Common myeloid progenitor, CD34-positive (primary cell): ENCODE measurements at regions of chr15 and their contacts with region 1.

Region 1: DNA sequence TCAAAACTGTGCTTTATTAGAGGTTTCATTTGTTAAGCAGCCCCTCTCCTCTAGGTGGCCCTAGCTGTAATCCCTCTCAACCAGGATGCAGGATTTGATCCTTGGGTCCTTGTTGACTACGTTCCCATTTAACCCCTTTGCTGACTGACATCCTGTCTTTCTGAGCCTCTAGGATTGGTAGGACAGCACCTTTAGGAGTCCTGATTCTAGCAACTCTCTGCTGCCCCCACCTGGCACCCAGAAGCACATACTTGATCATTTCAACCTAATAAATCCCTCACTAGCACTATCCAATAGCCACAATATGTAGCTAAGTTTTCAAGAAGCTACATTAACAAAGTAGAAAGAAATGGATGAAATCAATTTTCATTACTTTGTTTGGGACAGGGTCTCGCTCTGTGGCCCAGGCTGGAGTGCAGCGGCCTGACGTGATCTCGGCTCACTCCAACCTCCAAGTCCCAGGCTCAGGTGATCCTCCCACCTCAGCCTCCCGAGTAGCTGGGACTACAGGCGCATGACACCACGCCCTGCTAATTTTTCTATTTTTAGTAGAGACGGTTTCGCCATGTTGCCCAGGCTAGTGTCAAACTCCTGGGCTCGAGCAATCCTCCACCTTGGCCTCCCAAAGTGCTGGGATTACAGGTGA is 28.3 kb downstream of the RSL24D1 start:
- DNase-seq: peak; percentile 69 to 84 (median 76)
- H3K4me3 ChIP-seq: no peak overlapping the region
- H3K27ac ChIP-seq: no peak overlapping the region
- H3K4me1 ChIP-seq: no peaks in the 10 kb centered on the region
- H3K27me3 ChIP-seq: no peaks in the 10 kb centered on the region

Region 2: DNA sequence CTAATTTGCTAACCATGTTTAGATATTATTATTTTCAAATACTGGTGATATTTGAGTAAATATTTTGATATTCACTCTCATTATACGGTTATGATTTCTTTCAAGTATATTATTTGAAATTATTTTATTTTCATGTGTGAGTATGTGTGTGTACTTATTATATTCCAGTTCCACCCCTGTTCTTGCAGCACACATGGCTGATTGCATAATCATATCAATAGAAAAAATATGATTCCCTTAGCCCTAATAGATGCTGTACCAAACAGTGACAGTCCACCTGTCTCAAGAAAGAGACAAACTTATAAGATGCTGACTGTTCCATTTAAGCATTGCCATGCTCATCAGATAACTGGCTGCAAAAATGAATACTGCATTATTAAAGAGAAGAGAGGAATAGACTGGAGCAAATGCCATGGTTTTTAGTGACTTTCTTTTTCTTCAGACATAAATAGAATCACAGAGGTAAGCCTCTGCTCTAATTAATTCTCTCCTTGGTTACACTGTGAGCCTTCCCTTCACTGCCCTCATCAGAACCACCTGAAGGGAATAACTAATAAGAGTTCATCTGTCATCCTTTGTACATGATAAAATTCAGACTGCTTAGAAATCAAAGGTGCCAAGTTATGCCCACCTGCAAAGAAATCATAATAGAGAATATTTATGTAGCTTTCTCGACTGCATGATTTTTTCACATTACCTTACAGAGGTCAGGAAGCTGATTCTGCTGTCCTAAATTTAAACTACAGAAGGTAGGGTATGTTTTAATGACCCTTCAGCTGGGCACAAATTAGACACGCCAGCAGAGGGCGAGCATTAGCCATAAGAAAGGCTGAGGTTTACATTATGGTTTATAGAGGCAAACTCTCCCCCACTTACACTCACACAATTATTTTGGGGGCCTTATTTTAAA is 1205.9 kb before region 1 on chr15:
- CTCF ChIA-PET with region 1: interaction called, 21 read pairs
- POLR2A ChIA-PET with region 1: no interaction called
- DNase-seq: peak; percentile 35 to 64 (median 44)
- H3K4me3 ChIP-seq: no peak overlapping the region
- H3K27ac ChIP-seq: no peak overlapping the region
- H3K4me1 ChIP-seq: no peaks in the 10 kb centered on the region
- H3K27me3 ChIP-seq: no peaks in the 10 kb centered on the region

Region 3: GRCh38 chr15:53976844-53977392 is 1191.5 kb before region 1 on chr15:
- CTCF ChIA-PET with region 1: interaction called, 10 read pairs
- POLR2A ChIA-PET with region 1: no interaction called
- DNase-seq: peak; percentile 3 to 39 (median 32)
- H3K4me3 ChIP-seq: no peak overlapping the region
- H3K27ac ChIP-seq: no peak overlapping the region
- H3K4me1 ChIP-seq: peaks cover 0 to 11% (median 9%) of the 10 kb centered on the region in 4 experiments
- H3K27me3 ChIP-seq: peaks cover 2 to 36% (median 10%) of the 10 kb centered on the region in 5 experiments

Region 4: DNA sequence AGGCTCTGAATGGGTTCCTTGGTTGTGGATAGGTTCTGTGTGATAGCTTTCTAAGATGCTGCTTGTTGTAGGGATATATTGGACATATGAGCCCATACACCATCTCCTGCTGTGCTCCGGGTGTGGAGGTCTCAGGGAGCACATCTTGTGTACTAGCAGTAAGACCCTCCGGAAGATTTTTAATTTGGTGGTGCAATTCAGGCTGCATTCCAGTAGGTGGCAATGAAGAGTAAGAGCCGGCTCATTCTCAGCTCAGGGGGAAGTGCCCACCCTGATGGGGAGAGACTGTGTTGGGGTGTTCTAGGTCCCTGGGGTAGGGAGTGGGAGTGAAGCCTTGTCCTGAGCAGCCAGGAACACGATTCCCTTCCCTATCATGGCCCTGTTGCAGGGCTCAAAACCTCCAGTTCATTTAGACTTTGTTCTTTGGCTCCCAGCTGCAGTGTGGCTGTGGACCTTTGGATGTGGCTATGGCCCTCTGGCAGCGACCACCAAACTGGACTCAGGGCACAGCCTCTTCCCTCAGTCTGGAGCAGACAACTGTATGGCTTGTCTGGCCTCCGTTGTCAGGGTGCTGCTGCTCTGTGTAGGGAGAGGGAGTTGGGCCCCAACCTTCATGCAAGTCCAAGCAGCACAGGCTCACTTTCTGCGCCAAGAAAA is 1085.5 kb before region 1 on chr15:
- CTCF ChIA-PET with region 1: interaction called, 10 read pairs
- POLR2A ChIA-PET with region 1: no interaction called
- DNase-seq: peak; percentile 34 to 61 (median 35)
- H3K4me3 ChIP-seq: no peak overlapping the region
- H3K27ac ChIP-seq: no peak overlapping the region
- H3K4me1 ChIP-seq: no peaks in the 10 kb centered on the region
- H3K27me3 ChIP-seq: no peaks in the 10 kb centered on the region

Region 5: GRCh38 chr15:55116636-55117035 is 51.8 kb before region 1 on chr15:
- CTCF ChIA-PET with region 1: no interaction called
- POLR2A ChIA-PET with region 1: no interaction called
- DNase-seq: no peak
- H3K4me3 ChIP-seq: no peak overlapping the region
- H3K27ac ChIP-seq: no peak overlapping the region
- H3K4me1 ChIP-seq: no peaks in the 10 kb centered on the region
- H3K27me3 ChIP-seq: no peaks in the 10 kb centered on the region

Region 6: DNA sequence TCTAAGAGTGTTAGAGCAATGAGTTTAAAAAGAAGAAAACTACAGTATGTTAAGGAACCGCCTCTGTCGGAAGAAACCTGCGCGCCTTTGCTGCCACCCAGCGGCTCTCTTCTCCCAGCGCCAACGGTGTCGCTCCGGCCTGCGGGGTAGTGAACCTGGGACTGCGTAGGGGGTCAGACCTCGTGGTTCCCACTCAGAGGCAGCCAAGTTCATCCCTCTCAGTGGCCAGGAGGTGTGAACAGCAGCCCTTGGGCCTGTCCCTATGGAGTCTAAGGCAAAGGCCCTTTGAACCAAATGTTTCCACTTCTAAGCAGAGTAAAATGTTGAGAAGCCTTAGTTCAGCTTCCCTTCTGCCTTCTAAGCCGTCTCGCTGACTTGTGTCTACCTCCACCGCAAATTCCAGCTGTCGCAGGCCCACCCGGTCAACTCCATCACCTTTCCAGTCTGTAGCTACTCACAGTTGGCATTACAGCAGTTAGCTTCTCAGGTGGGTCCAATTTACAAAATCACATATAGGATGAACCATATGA is 122.1 kb after region 1 on chr15:
- CTCF ChIA-PET with region 1: no interaction called
- POLR2A ChIA-PET with region 1: no interaction called
- DNase-seq: peak; percentile 86 to 88 (median 87)
- H3K4me3 ChIP-seq: peak overlapping the region in 6 of 7 experiments; percentile 85 to 97 (median 88)
- H3K27ac ChIP-seq: peak overlapping the region; percentile 25 to 79
- H3K4me1 ChIP-seq: peaks cover 0 to 22% (median 10%) of the 10 kb centered on the region in 4 experiments
- H3K27me3 ChIP-seq: no peaks in the 10 kb centered on the region